Activated CD4-positive, alpha-beta T cell treated with anti-CD3 and anti-CD28 coated beads for 36 hours (primary cell): ENCODE measurements at regions of chr7 and their contacts with region 1.

Region 1: GRCh38 chr7:154953006-154953684 is 49.8 kb downstream of the PAXIP1 start:
- DNase-seq: peak; percentile 83
- ATAC-seq: peak; percentile 57
- H3K4me3 Mint-ChIP-seq: no peak overlapping the region
- H3K27ac Mint-ChIP-seq: no peak overlapping the region
- H3K4me1 Mint-ChIP-seq: no peaks in the 10 kb centered on the region
- H3K27me3 Mint-ChIP-seq: no peaks in the 10 kb centered on the region

Region 2: GRCh38 chr7:154913638-154914312 is 39.4 kb before region 1 on chr7:
- CTCF ChIA-PET with region 1: interaction called, 21 read pairs
- POLR2A ChIA-PET with region 1: no interaction called
- intact Hi-C with region 1: loop called (anchors 1 to 5 kb)
- DNase-seq: peak; percentile 94
- ATAC-seq: peak; percentile 99
- H3K4me3 Mint-ChIP-seq: peak overlapping the region; percentile 56
- H3K27ac Mint-ChIP-seq: no peak overlapping the region
- H3K4me1 Mint-ChIP-seq: peaks cover 5% of the 10 kb centered on the region
- H3K27me3 Mint-ChIP-seq: peaks cover 10% of the 10 kb centered on the region

Region 3: DNA sequence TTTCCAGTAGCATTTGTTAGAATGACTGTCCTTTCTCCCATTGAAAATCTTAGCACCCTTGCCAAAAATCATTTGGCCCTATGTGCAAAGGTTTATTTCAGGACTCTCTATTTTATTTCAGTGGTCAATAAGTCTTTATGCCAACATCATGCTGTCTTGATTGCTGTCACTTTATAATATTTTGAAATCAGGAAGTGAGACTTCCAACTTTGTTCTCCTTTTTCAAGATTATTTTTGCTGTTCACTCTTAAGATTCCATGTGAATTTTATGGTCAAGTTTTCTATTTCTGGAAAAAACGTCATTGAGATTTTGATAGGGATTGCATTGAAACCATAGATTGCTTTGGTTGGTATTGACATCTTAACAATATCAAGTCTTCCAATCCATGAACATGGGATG is 15.3 kb before region 1 on chr7:
- CTCF ChIA-PET with region 1: interaction called, 45 read pairs
- POLR2A ChIA-PET with region 1: no interaction called
- intact Hi-C with region 1: no loop called
- DNase-seq: no peak
- ATAC-seq: no peak
- H3K4me3 Mint-ChIP-seq: no peak overlapping the region
- H3K27ac Mint-ChIP-seq: no peak overlapping the region
- H3K4me1 Mint-ChIP-seq: peaks cover 3% of the 10 kb centered on the region
- H3K27me3 Mint-ChIP-seq: no peaks in the 10 kb centered on the region

Region 4: DNA sequence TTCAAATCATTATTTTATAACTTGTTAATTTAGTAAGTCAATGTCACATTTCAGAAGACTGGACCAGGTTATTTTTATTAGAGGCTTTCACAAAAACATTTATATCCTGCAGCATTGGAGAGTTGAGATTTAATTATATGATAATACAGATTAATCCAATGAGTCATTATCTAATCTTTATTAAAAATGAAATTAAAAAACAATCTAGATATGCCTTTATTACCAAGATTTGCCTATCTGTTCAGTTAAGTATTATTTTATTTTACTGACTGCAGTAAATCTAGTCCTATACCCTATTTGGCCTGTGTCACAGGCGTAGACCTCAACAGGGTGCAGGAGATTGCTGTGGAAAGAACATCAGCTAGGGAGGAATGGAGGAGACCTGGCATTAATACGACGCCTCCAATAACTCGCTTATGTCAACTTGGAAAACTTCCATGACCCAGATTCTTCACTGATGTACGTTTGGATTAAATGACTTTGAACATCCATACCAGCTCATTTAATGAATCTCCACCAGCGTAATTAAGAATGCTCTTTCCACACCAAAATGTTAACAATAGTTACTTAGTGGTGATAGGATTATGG is 31.6 kb after region 1 on chr7:
- CTCF ChIA-PET with region 1: interaction called, 11 read pairs
- POLR2A ChIA-PET with region 1: no interaction called
- intact Hi-C with region 1: no loop called
- DNase-seq: no peak
- ATAC-seq: no peak
- H3K4me3 Mint-ChIP-seq: no peak overlapping the region
- H3K27ac Mint-ChIP-seq: no peak overlapping the region
- H3K4me1 Mint-ChIP-seq: peaks cover 2% of the 10 kb centered on the region
- H3K27me3 Mint-ChIP-seq: no peaks in the 10 kb centered on the region